AG04450 (cell line): ENCODE measurements at regions of chr7 and their contacts with region 1.

Region 1: DNA sequence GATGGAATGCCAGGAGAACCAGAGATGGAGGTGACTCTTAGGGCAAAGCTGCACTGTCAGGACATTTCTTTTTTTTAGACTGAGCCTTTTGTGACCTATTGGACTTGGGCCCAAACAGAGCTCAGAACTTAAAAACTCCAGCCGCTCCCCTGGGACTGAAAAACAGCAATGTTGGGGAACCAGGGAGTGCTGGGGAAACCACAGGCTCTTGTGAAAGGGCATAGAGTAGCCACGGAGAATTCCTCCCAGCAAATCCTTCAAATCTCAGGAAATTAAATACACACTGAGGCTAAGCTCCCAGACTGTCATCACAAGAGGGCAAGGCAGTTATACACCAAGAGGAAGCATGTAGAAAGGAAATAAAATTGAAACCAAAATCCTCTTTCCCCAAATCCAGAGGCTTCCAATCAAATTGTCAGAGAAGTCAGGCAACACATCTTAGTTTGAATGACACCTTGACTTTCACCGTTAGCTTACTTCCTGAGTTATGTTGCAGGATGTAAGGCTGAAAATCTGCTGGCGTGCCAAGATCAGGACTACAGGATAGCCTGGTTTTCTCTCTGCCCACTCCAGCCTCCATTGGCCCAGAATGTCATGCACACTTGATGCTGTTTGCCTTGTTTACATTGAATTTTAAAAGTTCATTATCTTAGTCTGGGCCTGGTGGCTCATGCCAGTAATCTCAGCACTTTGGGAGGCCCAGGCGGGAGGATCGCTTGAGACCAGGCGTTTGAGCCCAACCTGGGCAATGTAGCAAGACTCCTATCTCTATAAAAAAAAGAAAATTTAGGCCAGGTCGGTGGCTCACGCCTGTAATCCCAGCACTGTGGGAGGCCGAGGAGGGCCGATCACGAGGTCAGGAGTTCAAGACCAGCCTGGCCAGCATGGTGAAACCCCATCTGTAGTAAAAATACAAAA is 2.6 kb upstream of the RFC2 start:
- DNase-seq: no peak
- H3K4me3 ChIP-seq: no peak overlapping the region
- H3K27ac ChIP-seq: peak overlapping the region; percentile 21
- H3K27me3 ChIP-seq: no peaks in the 10 kb centered on the region
- CTCF ChIP-seq: no peak

Region 2: GRCh38 chr7:74012842-74013249 is 243.9 kb before region 1 on chr7:
- CTCF ChIA-PET with region 1: no interaction called
- POLR2A ChIA-PET with region 1: interaction called, 10 read pairs
- DNase-seq: no peak
- H3K4me3 ChIP-seq: no peak overlapping the region
- H3K27ac ChIP-seq: no peak overlapping the region
- H3K27me3 ChIP-seq: no peaks in the 10 kb centered on the region
- CTCF ChIP-seq: no peak

Region 3: DNA sequence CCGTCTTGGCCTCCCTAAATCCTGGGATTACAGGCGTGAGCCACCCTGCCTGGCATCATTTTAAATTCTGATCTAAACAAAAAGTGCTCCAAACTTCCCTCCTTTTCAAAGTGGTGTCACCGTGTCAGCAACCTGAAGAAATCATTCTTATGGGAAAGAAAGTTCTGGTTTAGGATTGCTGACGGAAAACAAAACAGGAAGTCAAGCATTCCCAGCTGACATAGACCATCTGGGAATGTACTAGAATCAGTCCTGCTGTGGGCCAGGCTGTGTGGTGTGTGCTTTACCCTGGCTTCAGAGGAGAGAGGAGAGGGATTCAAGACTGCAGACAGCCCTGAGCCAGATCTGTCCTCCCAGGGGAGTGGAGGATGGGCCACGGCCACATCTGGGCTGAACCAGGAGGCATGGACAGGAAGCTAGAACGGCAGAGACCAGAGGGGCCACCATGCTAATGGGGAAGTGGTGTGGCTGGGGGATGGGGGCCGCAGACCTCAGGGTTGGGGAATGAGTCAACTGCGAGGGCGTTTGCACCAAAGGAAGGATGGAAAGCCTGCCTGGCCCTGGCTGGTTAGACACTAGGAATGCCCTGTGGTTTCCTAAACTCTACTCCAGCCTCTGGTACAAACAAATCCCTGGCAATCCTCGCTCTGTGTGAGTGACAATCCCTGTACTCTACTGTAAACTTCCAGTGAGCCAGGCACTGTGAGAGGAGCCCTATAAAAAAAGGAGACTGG is 15.7 kb after region 1 on chr7:
- CTCF ChIA-PET with region 1: no interaction called
- POLR2A ChIA-PET with region 1: no interaction called
- DNase-seq: peak; percentile 91
- H3K4me3 ChIP-seq: 0 out of 2 replicates have a peak overlapping the region, but pooled peaks have one; percentile 12
- H3K27ac ChIP-seq: peak overlapping the region; percentile 99
- H3K27me3 ChIP-seq: no peaks in the 10 kb centered on the region
- CTCF ChIP-seq: no peak